ENCODE measurements at regions of chr18 and their contacts with region 1.

Region 1: GRCh38 chr18:13611601-13612195 is 114.7 kb downstream of the FAM210A start:
- DNase-seq: peak in 39 of 42 donors; percentile 61 to 87 (median 76)

Region 2: DNA sequence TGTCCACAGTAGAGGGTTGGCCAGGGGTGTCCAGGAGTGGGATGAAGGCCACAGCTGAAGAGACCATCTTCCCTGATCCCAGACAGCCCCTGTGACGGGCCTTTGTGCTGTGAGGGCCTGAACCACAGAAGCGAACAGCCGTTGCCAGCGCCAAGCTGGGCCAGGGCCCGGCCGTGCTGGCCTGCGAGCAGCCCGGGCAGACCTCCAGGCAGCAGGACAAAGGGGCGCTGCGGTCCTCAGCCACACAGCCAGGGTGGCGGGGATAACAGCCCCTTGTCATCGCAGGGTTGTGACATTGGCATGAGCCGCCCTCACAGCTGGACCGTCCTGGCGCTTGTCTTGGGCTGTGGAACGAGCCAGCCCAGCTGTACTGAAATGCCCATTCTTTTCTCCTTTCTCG is 46.5 kb before region 1 on chr18:
- intact Hi-C with region 1: loop called (anchors 1 kb)
- DNase-seq: peak; percentile 90 to 99 (median 96)